ENCODE measurements at regions of chr9 and their contacts with region 1.

Region 1: DNA sequence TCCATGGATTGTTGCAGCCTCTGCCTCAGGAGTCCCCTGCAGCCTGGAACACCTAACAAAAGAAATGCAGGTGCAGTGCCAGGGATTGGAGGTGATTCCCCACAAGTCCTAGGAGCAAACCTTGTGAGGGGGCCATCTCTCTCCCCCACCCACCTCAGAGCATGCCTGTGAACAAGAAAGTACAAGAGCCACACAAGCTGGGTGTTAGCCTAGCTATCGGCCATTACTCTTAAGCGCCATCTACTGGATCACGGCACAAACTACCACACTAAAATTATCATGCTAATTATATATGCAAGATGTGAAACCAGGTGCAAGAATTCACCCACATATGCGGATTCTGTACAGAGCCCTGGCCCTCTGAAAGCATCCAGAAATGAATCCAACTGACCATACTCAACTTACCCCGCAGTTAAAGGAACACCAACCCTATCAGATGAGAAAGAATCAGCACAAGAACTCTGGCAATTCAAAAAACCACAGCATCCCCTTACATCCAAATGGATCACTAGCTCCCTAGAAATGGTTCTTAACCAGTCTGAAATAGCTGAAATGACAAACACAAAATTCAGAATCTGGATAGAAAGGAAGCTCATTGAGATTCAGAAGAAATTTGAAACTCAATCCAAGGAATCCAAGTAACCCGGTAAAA is 16.5 kb upstream of the PRSS3 start:
- DNase-seq: peak; percentile 73
- H3K4me3 ChIP-seq: no peak overlapping the region
- H3K27ac ChIP-seq: no peak overlapping the region
- H3K4me1 ChIP-seq: no peaks in the 10 kb centered on the region
- H3K27me3 ChIP-seq: no peaks in the 10 kb centered on the region
- CTCF ChIP-seq: peak; percentile 72 to 80
- POLR2A ChIP-seq: no peak

Region 2: GRCh38 chr9:33750307-33750838 is 28.5 kb before region 1 on chr9:
- CTCF ChIA-PET with region 1: interaction called, 17 read pairs
- POLR2A ChIA-PET with region 1: no interaction called
- dilution Hi-C with region 1: no loop called
- intact Hi-C with region 1: no loop called
- DNase-seq: no peak
- H3K4me3 ChIP-seq: peak overlapping the region; percentile 32 to 94 (median 56)
- H3K27ac ChIP-seq: no peak overlapping the region
- H3K4me1 ChIP-seq: peaks cover 8% of the 10 kb centered on the region
- H3K27me3 ChIP-seq: peaks cover 0 to 5% of the 10 kb centered on the region in 2 experiments
- CTCF ChIP-seq: no peak
- POLR2A ChIP-seq: no peak

Region 3: GRCh38 chr9:33762343-33762742 is 16.5 kb before region 1 on chr9:
- CTCF ChIA-PET with region 1: interaction called, 12 read pairs
- POLR2A ChIA-PET with region 1: no interaction called
- dilution Hi-C with region 1: no loop called
- intact Hi-C with region 1: no loop called
- DNase-seq: no peak
- H3K4me3 ChIP-seq: no peak overlapping the region
- H3K27ac ChIP-seq: no peak overlapping the region
- H3K4me1 ChIP-seq: peaks cover 28% of the 10 kb centered on the region
- H3K27me3 ChIP-seq: no peaks in the 10 kb centered on the region
- CTCF ChIP-seq: no peak
- POLR2A ChIP-seq: no peak

Region 4: DNA sequence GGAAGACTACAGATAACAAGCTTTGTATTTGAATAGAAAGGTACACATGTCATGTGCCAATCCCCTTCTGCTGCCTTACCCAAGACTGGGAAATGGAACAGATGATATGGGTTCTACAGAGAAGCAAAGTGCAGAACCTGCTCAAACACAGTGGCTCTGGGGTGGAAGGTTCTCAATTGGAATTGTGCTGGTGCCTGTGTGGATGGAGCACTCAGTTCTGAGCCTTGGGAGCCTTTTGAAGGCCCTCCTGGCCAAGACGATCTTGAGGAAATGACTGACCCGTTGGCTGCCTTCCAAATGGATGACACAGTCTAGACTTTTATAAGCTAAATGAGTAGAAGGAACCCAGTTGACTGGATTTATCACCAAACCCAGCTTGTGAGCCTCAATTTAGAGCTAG is 12.3 kb after region 1 on chr9:
- CTCF ChIA-PET with region 1: interaction called, 16 read pairs
- POLR2A ChIA-PET with region 1: no interaction called
- dilution Hi-C with region 1: no loop called
- intact Hi-C with region 1: no loop called
- DNase-seq: peak; percentile 69
- H3K4me3 ChIP-seq: no peak overlapping the region
- H3K27ac ChIP-seq: no peak overlapping the region
- H3K4me1 ChIP-seq: peaks cover 5% of the 10 kb centered on the region
- H3K27me3 ChIP-seq: no peaks in the 10 kb centered on the region
- CTCF ChIP-seq: no peak
- POLR2A ChIP-seq: no peak

Region 5: GRCh38 chr9:33932078-33932807 is 153.4 kb after region 1 on chr9:
- CTCF ChIA-PET with region 1: no interaction called
- POLR2A ChIA-PET with region 1: no interaction called
- dilution Hi-C with region 1: no loop called
- intact Hi-C with region 1: no loop called
- DNase-seq: no peak
- H3K4me3 ChIP-seq: no peak overlapping the region
- H3K27ac ChIP-seq: no peak overlapping the region
- H3K4me1 ChIP-seq: no peaks in the 10 kb centered on the region
- H3K27me3 ChIP-seq: no peaks in the 10 kb centered on the region
- CTCF ChIP-seq: no peak
- POLR2A ChIP-seq: no peak

Measured in endothelial cell of umbilical vein (primary cell).